Activated CD4-positive, alpha-beta memory T cell treated with anti-CD3 and anti-CD28 coated beads, Interleukin-2, amount 10 ng/mL, durations not matched to agents 7 days and 5 days (primary cell): ENCODE measurements at regions of chr12 and their contacts with region 1.

Region 1: DNA sequence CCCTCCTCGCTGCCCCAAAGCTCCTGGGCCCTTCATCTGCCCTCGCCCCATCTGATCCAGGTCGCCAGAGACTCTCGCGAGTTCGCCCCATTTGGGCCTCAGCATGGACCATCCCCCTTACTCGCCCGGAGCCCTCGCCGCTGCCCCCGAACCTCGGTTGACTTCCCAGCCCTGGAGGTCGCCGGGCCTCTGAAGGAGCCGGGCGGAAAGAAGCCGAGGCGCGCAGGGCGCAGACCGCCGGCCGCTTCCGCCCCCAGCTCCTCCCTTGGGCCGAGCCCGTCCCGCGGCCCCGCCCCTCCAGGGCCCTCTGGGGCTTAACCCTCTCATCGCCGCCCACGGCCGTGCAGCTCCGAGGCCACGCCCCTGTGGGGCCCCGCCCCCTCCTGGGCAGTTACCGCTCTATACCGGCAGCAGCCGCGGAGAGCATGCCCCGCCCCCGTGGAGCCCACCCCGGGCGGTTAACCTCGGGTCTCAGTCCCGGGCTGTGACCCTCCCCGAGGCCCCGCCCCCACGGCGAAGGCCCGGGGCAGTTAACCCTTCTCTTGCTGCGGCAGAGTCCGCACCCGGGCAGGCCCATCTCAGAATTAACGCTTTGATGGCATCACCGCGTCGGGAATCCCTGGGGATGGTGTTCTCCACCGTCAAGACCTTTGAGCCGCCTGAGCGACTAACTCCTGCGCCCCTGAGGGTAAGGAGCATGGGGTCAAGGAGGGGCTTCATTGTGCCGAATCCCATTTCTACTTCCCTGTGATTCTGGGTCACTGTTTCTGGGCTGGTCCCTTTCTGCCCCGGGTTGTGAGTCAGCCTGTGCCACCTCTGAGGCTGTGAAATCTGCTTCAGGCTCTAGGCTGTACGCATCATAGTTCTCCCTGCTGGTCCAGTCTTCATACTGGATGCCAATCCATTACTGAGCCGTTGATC is at the start of gene SPSB2:
- DNase-seq: peak; percentile 99
- H3K4me3 Mint-ChIP-seq: peak within 1 kb of the TSS; percentile 93
- H3K27ac Mint-ChIP-seq: peak within 1 kb of the TSS; percentile 90
- H3K4me1 Mint-ChIP-seq: peaks cover 61% of the 10 kb centered on the region
- H3K27me3 Mint-ChIP-seq: no peaks in the 10 kb centered on the region
- total RNA-seq, gene SPSB2: 11.1 to 11.2 TPM

Region 2: DNA sequence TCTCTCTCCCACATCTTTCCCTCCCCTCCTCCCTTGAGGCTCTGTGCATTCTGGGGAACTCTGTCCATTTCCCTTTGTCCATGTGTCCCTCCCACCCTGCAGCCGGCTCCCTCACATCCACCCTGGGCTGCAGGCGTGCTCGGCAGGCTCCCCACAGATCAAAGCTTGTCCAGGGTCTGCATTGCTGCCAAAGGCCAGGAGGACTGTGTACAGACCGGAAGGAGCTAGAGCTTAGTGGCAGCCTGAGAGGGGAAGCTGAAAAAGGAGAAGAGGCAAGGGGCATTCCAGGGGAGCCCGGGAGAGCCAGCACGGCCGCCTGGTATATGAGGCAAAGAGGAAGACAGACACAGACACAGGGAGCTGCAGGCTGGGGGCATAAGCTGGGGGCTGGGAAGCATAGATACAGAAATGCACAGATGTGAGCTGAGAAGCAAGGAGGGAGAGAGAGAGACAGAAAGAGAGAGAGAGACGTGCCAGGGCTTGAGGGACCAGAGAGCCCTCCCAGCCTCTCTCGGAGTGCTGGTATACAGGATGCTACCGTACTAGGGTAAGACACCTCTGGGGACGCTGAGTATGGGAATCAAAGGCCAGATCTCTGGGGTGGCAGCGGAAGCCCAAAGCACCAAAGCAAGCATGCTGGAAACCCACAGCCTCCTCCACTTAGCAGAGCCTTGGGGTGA is 80.7 kb before region 1 on chr12:
- CTCF ChIA-PET with region 1: interaction called, 8 read pairs
- POLR2A ChIA-PET with region 1: interaction called, 16 read pairs
- DNase-seq: peak; percentile 70
- H3K4me3 Mint-ChIP-seq: peak overlapping the region; percentile 93
- H3K27ac Mint-ChIP-seq: peak overlapping the region; percentile 90
- H3K4me1 Mint-ChIP-seq: peaks cover 51% of the 10 kb centered on the region
- H3K27me3 Mint-ChIP-seq: no peaks in the 10 kb centered on the region

Region 3: GRCh38 chr12:6890789-6891645 is 17.7 kb after region 1 on chr12:
- CTCF ChIA-PET with region 1: interaction called, 120 read pairs
- POLR2A ChIA-PET with region 1: interaction called, 69 read pairs
- DNase-seq: peak; percentile 99
- H3K4me3 Mint-ChIP-seq: peak overlapping the region; percentile 79
- H3K27ac Mint-ChIP-seq: peak overlapping the region; percentile 93
- H3K4me1 Mint-ChIP-seq: peaks cover 38% of the 10 kb centered on the region
- H3K27me3 Mint-ChIP-seq: no peaks in the 10 kb centered on the region

Region 4: GRCh38 chr12:6914246-6914946 is 41.0 kb after region 1 on chr12 and contains the start of gene ENO2:
- CTCF ChIA-PET with region 1: interaction called, 11 read pairs
- POLR2A ChIA-PET with region 1: interaction called, 10 read pairs
- DNase-seq: peak; percentile 86
- H3K4me3 Mint-ChIP-seq: peak within 1 kb of the TSS; percentile 90
- H3K27ac Mint-ChIP-seq: peak within 1 kb of the TSS; percentile 80
- H3K4me1 Mint-ChIP-seq: peaks cover 50% of the 10 kb centered on the region
- H3K27me3 Mint-ChIP-seq: no peaks in the 10 kb centered on the region
- total RNA-seq, gene ENO2: 206 to 207 TPM

Region 5: DNA sequence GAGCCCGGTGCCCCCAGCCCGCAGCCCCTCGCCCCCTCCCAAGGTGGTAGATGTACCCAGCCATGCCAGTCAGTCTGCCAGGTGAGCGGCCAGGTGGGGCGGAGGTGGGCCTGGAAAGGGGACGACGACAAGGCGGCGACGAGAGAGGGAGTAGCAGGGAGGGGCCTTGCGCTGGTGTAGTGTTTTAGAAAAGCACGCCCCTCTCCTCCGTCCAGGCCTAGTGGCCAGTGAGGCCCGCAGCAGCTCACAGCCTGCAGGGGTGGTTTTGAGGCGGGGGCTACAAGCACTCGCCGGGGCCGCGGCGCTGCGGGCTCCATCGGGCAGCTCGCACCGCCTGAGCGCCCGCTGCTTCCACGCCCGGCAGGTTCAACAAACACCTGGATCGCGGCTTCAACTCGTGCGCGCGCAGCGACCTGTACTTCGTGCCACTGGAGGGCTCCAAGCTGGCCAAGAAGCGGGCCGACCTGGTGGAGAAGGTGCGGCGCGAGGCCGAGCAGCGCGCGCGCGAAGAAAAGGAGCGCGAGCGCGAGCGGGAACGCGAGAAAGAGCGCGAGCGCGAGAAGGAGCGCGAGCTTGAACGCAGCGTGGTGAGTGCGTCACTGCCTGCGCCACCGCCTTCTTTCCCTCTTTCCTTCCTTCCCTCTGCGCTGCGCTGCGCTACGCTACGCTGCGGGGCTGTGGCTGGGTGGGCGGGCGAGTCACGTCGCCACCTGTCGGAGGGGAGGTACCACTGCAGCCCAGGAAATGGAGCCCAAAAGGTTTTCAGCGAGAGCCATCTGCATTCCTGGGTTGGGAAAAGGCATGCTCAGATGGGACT is 64.3 kb after region 1 on chr12:
- CTCF ChIA-PET with region 1: interaction called, 20 read pairs
- POLR2A ChIA-PET with region 1: interaction called, 72 read pairs
- DNase-seq: peak; percentile 96
- H3K4me3 Mint-ChIP-seq: peak overlapping the region; percentile 88
- H3K27ac Mint-ChIP-seq: peak overlapping the region; percentile 95
- H3K4me1 Mint-ChIP-seq: peaks cover 54% of the 10 kb centered on the region
- H3K27me3 Mint-ChIP-seq: no peaks in the 10 kb centered on the region

Region 6: GRCh38 chr12:6959058-6959804 is 85.9 kb after region 1 on chr12:
- CTCF ChIA-PET with region 1: interaction called, 12 read pairs
- POLR2A ChIA-PET with region 1: interaction called, 43 read pairs
- DNase-seq: peak; percentile 78
- H3K4me3 Mint-ChIP-seq: peak overlapping the region; percentile 88
- H3K27ac Mint-ChIP-seq: peak overlapping the region; percentile 99
- H3K4me1 Mint-ChIP-seq: peaks cover 92% of the 10 kb centered on the region
- H3K27me3 Mint-ChIP-seq: no peaks in the 10 kb centered on the region

Region 7: GRCh38 chr12:6987948-6988553 is 114.7 kb after region 1 on chr12:
- CTCF ChIA-PET with region 1: no interaction called
- POLR2A ChIA-PET with region 1: no interaction called
- DNase-seq: no peak
- H3K4me3 Mint-ChIP-seq: no peak overlapping the region
- H3K27ac Mint-ChIP-seq: no peak overlapping the region
- H3K4me1 Mint-ChIP-seq: no peaks in the 10 kb centered on the region
- H3K27me3 Mint-ChIP-seq: no peaks in the 10 kb centered on the region

Region 8: GRCh38 chr12:7108796-7109571 is 235.6 kb after region 1 on chr12 and contains the start of gene C1RL:
- CTCF ChIA-PET with region 1: interaction called, 15 read pairs
- POLR2A ChIA-PET with region 1: interaction called, 21 read pairs
- DNase-seq: peak; percentile 83
- H3K4me3 Mint-ChIP-seq: peak within 1 kb of the TSS; percentile 91
- H3K27ac Mint-ChIP-seq: peak within 1 kb of the TSS; percentile 94
- H3K4me1 Mint-ChIP-seq: peaks cover 61% of the 10 kb centered on the region
- H3K27me3 Mint-ChIP-seq: no peaks in the 10 kb centered on the region
- total RNA-seq, gene C1RL: 26.5 to 28.8 TPM